ENCODE measurements at regions of chr2 and their contacts with region 1.

Region 1: DNA sequence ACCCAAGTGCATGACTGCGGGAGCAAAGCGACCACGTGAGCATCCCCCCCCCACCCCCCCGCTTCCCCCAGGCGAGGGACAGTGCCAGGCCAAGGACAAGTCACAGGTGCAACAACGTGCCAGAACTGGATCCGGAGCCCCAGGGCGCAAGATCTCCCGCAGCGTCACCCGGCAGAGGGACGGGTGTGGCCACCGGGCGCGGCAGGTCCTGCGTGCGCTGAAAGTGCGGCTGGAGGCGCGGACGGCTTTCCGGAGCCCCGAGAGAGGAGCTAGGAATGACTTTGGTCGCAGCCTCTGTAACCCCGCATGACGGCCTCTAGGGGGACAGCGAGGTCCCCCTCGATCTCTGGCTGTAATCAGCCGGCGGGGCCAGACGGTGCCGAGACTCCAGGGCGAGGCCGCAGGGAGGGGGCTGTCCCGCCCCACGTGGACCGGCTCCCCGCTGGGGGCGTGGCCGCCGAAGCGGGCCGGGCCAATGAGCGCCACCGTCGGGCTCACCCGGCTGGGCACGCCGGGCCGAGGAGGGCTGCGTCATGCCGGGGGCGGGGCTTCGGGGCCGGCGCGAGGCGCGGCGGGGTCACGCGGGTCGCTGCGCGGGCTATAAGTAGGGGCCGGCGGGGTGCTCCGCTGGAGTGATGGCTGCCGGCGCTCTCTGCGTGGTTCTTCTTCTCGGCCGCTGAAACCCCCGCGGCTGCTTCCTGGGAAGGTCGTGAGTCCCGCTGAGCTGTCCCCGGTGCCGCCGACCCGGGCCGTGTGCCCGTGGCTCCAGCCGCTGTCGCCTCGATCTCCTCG is at the start of gene SLC20A1:
- DNase-seq: peak; percentile 90 to 100 (median 99)

Region 2: DNA sequence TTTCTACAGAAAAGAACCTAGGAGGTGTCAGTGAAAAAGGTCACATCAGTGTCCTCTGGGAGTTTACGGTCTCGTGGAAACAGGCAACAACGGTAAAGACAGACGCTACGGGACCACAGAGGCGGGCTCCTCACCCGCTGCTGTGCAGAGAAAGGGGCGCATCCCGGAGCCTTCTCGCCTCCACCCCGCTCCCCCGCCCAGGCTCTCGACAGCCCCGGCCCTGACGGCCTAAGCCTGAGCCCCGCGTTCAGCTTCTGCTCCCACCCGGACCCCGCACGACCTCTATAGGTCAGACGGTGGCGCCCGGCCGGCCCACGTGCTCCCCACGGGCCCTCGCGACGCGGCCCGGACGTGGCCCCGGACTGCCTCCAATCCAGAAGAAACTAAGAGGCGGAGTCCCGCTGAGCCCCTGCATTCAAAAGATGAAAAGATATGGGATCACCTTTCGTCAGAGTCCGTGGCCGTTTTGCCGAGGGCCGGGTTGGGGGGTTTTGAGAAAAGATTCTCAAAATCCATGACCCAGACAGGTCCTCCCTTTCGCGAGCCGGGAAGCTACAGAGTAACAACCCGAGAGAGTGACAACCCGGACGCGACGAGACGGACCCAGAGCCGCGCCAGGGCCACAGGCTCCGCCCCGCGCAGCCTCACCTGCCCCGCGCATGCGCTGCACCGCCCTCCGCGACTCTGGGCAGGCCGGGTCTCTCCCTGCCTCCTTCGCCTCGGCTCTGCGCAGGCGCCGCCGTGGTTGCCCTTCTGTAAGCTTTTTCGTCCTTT is 390.9 kb before region 1 on chr2 and contains the start of gene ZC3H8:
- intact Hi-C with region 1: loop called (anchors 10 kb)
- DNase-seq: peak; percentile 85 to 98 (median 94)

Region 3: DNA sequence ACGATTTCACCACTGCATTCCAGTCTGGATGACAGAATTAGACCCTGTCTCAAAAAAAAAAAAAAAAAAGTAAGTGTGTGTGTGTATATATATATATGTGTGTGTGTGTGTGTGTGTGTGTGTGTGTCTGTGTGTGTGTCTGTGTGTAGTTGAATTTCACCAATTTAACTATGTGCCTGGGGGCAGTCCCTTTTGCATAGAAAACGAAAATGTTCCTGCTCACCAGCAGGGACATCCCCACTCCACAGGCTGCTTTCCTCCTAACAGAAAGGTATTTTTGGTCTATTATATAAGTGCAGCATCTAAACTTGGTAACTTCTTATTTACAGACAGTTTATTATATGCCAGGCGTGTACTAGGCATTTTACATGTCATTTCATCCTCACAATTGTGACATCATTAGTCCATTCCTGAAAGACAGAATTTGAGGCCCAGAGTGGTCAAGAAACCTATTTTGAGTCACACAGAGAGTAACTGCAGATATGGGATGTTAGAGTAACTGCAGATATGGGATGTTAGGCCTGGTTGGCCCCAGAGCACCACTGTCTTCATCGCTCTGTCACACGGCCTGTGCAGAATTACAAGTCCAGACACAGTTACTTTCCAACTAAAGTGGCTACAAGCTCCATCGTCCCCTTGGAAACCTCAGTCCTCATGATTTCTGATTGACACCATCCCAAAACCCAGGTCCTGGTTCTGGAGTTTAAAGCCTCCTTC is 172.8 kb before region 1 on chr2:
- intact Hi-C with region 1: no loop called
- DNase-seq: no peak

Region 4: DNA sequence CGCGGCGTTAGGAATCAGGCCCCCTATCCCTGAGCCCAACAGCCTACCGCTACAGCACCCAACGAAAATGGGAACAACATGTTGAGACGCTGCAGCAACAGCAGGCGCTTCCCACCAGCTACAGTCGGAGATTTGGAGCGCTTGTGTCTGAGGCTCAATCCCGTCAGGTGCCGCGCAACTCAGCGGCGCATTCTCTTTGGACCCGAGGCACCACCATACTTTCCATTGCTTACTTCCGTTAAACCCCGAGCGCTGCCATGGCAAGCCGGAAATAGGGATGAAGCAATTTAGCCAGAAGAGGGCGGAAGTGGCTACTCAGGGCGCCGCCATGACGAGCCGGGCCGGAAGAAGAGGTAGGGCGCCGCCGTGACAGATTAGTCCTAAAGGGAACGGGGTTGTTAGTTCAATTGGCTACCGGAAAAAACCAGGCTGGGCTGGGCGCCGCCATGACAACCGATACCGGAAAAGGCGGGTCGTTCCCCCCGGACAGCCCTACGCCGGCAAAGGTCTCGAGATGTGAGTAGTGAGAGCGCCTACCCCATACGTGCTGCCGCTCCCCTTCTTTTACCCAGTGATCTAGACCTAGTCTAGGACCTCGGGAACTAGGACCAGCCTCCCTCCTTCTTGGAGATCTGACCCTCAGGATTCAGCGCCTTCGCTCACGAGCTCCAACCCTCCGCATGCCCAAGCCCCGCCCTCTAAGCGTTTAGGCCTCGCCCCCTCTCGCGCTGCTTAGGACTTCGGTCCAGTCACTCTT is 61.2 kb before region 1 on chr2 and contains the start of gene CHCHD5:
- intact Hi-C with region 1: loop called (anchors 5 kb)
- DNase-seq: peak; percentile 90 to 98 (median 96)

Region 5: GRCh38 chr2:112726497-112727190 is 81.1 kb after region 1 on chr2:
- intact Hi-C with region 1: loop called (anchors 5 kb)
- DNase-seq: peak; percentile 84 to 95 (median 91)

Measured in head of caudate nucleus (tissue), 42 donors.